Calu3 (cell line): ENCODE measurements at regions of chr5 and their contacts with region 1.

Region 1: GRCh38 chr5:65611524-65611923 is 12.6 kb downstream of the TRIM23 start:
- DNase-seq: peak; percentile 73
- H3K4me3 Mint-ChIP-seq: peak overlapping the region; percentile 50
- H3K27ac Mint-ChIP-seq: peak overlapping the region; percentile 62
- H3K4me1 Mint-ChIP-seq: peaks cover 37% of the 10 kb centered on the region
- H3K27me3 Mint-ChIP-seq: no peaks in the 10 kb centered on the region
- CTCF ChIP-seq: no peak

Region 2: DNA sequence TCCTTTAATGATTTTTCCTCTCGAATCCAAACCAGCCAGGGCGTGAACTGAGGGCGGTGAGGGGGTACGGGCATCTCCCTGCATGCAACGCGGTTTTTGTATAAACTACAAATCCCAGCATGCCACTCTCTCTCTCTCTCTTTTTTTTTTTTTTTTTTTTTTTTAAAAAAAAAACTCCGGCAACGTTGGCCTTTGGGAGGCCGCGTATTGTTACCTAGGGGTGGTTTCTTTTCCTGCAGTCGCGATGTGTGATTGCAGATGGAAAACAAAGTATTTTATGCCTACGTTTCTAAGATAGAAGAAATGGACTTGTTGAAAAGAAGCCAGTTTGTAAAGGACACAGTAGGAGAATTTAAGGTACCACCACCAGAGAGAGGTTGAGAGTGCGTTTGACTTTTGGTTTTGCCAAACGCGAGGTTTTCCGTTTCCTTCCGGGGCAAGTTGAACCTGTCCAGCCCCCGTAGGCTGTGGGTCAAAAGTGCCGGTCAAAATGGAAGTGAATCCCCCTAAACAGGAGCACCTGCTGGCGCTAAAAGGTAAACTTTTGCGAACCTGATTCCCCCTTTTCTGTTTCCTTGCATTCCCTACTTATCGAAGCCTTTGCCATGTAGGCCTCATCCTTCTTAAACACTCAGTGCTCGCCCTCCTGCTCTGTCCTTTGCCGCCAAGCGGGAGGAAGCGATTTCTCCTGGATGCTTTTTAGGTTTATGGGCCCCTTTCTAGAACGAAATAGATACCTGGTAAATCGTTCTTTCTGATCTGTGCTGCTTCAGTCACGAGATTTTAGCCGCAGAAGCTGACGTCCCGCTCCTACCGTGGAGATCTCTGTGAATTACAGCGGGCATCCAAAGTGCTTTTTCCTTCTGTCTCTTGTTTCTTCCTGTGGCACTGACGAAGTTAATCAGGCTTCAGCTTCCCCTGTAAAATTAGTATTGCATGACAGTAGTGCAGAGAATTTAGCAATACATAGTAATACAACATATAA is 13.3 kb after region 1 on chr5 and contains the starts of genes SHLD3 and TRAPPC13:
- CTCF ChIA-PET with region 1: interaction called, 5 read pairs
- intact Hi-C with region 1: loop called (anchors 1 kb)
- DNase-seq: peak; percentile 78
- H3K4me3 Mint-ChIP-seq: peak within 1 kb of the TSS; percentile 99
- H3K27ac Mint-ChIP-seq: peak within 1 kb of the TSS; percentile 98
- H3K4me1 Mint-ChIP-seq: no peaks in the 10 kb centered on the region
- H3K27me3 Mint-ChIP-seq: no peaks in the 10 kb centered on the region
- CTCF ChIP-seq: no peak
- total RNA-seq, gene SHLD3: 4.5 and 4.7 TPM in 2 replicates
- total RNA-seq, gene TRAPPC13: 27.6 and 28.2 TPM in 2 replicates